Activated CD8-positive, alpha-beta T cell treated with anti-CD3 and anti-CD28 coated beads, Interleukin-2, amount 10 ng/mL, durations not matched to agents 7 days and 5 days (primary cell): ENCODE measurements at regions of chr6 and their contacts with region 1.

Region 1: GRCh38 chr6:112043032-112044007 is 10.6 kb upstream of the CCN6 start:
- DNase-seq: peak; percentile 96
- ATAC-seq: peak; percentile 99
- H3K4me3 Mint-ChIP-seq: peak overlapping the region; percentile 95
- H3K27ac Mint-ChIP-seq: peak overlapping the region; percentile 99
- H3K4me1 Mint-ChIP-seq: peaks cover 18% of the 10 kb centered on the region
- H3K27me3 Mint-ChIP-seq: no peaks in the 10 kb centered on the region

Region 2: DNA sequence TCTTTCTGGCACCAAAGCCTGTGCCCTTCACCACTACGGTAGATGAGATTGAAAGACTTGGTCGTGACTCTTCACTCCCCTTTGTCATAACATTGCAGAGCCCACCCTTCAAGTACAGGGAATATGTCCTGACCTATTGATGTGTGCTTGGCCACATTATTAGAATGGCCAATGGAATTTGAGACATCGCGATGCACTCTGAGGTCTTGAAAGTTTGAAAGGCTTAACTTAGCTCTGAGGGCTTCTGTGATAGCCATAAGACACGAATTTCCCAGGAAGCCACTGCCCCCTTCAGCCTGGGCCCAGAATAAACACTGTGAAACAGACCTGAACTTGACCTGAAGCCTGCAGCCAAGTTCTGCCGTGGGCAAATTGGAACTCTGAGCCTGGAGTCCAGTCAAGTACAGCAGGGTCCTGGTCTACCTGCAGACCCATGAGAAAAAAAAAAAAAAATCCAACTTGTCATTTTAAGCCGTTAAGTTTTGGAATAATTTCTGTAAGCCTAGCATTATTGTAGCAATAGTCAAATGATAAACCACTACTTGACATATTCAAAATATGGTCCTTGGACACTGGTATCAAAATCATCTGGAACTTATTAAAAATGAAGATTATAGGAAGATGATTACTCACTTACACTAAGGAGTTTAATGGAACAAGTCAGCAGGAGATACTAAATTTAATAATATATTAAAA is 400.7 kb before region 1 on chr6:
- CTCF ChIA-PET with region 1: interaction called, 13 read pairs
- POLR2A ChIA-PET with region 1: no interaction called
- DNase-seq: peak; percentile 68
- ATAC-seq: peak; percentile 79
- H3K4me3 Mint-ChIP-seq: no peak overlapping the region
- H3K27ac Mint-ChIP-seq: no peak overlapping the region
- H3K4me1 Mint-ChIP-seq: peaks cover 5% of the 10 kb centered on the region
- H3K27me3 Mint-ChIP-seq: no peaks in the 10 kb centered on the region

Region 3: DNA sequence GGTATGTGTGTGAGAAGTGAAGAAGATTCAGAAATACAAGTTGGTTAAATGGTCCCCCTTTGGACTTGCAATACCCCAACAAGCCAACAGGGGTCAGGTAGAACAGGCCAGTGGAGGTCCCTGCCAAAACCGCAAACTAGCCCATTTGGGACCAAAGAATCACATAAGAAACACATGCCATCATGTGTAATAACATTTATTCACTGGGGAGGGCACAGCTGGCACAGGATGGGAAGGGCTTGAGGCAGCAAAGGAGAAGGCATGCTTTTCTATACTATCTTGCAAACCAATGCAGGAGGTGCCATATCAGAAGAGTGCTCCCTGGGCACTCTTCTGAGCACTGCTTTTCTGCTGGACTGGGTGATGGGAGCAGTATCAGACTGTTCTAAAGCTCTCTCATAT is 321.6 kb before region 1 on chr6:
- CTCF ChIA-PET with region 1: interaction called, 11 read pairs
- POLR2A ChIA-PET with region 1: no interaction called
- DNase-seq: peak; percentile 70
- ATAC-seq: peak; percentile 27
- H3K4me3 Mint-ChIP-seq: no peak overlapping the region
- H3K27ac Mint-ChIP-seq: peak overlapping the region; percentile 68
- H3K4me1 Mint-ChIP-seq: peaks cover 54% of the 10 kb centered on the region
- H3K27me3 Mint-ChIP-seq: no peaks in the 10 kb centered on the region

Region 4: DNA sequence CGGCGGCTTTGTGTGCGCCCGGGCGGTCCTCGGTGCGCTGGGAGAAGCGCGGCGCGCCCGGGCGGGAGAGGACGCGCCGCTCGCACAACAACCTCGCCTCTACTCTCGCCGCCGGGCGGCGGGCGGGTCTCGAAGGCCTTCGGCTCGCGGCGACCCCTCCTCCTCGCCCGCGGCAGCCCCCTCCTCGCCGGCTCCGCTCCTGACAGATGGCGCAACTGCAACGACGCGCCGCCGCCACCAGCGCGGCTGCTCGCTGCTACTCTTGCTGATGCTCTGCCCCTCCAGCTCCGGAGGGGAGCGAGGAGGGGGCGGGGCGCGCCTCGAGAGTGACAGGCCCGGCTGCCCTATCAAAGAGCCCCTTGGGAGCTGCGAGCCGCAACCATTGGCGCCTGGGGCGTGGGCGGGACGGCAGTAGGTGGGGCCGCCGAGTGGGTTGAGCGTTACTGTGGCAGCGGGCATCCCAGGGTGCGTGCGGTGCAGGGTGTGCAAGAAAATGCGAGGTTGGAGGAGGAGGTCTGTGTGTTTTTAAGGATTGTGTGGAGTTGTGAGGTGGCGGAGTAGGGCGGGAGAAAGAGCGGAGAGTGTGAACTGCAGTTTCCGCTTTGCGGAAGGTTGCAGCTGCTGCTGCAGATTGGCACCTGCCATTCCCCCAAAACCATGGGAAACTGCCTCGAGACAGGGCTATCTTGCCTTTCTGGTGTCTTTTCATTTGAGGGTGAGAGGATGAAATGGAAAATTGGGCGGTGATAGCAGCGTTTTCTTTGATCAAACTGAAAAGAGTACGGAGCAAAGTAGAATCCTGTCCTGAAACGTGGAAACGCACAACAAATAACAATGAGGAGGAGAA is 169.9 kb before region 1 on chr6 and contains the start of gene FYN:
- CTCF ChIA-PET with region 1: interaction called, 10 read pairs
- POLR2A ChIA-PET with region 1: no interaction called
- DNase-seq: peak; percentile 99
- ATAC-seq: peak; percentile 86
- H3K4me3 Mint-ChIP-seq: peak within 1 kb of the TSS; percentile 94
- H3K27ac Mint-ChIP-seq: peak within 1 kb of the TSS; percentile 95
- H3K4me1 Mint-ChIP-seq: peaks cover 37% of the 10 kb centered on the region
- H3K27me3 Mint-ChIP-seq: no peaks in the 10 kb centered on the region
- total RNA-seq, gene FYN: 148 to 154 TPM

Region 5: DNA sequence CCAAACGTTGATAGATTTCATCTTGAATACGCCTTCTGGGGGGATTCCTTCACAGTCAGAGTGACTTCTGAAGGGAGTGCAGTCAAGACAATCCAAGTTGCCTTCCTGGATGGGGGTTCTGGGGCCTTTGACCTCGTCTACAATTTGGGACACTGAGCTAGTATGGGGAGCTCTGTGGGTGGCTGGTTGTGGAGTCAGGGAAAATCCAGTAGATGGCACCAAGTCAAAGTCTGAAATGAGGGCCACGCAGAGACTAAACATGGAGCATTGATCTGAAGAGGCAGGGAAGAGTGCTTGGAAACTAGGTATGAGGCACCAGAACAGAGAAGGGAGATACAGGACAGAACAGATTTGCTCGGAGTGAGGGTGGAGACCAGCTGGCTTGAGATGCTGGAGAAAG is 33.0 kb before region 1 on chr6:
- CTCF ChIA-PET with region 1: interaction called, 119 read pairs
- POLR2A ChIA-PET with region 1: interaction called, 3 read pairs
- DNase-seq: no peak
- ATAC-seq: peak; percentile 47
- H3K4me3 Mint-ChIP-seq: no peak overlapping the region
- H3K27ac Mint-ChIP-seq: no peak overlapping the region
- H3K4me1 Mint-ChIP-seq: no peaks in the 10 kb centered on the region
- H3K27me3 Mint-ChIP-seq: no peaks in the 10 kb centered on the region

Region 6: DNA sequence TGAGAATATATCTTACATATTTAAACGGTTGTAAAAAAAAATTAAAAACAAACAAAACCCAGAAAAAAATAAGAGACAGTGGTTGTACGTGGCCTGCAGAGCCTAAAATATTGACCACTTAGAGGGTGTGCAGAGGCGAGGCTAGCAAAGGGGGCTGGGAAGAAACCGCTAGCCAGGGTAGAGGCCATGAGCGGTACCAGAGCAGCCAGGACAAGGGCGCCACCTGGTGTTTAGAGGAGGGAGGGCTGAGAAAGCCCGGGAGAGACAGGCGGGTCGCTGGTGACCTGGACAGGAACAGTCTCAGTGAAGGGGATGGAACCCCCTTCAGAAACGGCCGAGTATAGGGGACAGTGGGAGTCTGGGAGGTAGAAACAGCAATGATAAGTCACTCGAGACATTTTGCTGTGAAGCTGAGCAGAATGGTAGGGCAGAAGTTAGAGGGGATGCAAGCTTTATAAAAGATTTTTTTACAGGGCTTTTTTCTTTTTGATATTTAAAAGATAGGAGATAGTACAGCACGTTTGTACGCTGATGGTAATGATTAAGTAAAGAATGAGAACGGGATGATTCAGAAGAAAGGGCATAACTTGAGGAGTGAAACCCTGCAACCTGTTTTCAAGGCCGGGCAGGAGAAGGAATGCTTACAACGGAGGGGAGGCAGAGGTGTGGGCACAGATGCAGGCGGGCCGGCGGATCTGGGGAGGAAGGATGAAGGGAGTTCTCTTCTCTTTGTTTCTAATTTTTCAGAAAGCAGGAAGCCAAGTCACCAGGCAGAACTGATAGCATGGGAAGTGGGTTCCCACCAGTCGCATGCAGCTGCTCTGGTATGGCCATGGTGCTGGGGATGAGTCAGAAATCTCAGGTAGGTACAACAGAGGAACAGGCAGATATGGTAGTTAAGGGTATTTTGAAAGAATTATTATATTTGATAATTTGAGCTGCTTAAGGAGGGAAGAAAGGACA is 120.3 kb after region 1 on chr6:
- CTCF ChIA-PET with region 1: interaction called, 18 read pairs
- POLR2A ChIA-PET with region 1: no interaction called
- DNase-seq: peak; percentile 84
- ATAC-seq: peak; percentile 99
- H3K4me3 Mint-ChIP-seq: peak overlapping the region; percentile 56
- H3K27ac Mint-ChIP-seq: no peak overlapping the region
- H3K4me1 Mint-ChIP-seq: peaks cover 17% of the 10 kb centered on the region
- H3K27me3 Mint-ChIP-seq: peaks cover 49% of the 10 kb centered on the region